ENCODE measurements at regions of chr5 and their contacts with region 1.

Region 1: DNA sequence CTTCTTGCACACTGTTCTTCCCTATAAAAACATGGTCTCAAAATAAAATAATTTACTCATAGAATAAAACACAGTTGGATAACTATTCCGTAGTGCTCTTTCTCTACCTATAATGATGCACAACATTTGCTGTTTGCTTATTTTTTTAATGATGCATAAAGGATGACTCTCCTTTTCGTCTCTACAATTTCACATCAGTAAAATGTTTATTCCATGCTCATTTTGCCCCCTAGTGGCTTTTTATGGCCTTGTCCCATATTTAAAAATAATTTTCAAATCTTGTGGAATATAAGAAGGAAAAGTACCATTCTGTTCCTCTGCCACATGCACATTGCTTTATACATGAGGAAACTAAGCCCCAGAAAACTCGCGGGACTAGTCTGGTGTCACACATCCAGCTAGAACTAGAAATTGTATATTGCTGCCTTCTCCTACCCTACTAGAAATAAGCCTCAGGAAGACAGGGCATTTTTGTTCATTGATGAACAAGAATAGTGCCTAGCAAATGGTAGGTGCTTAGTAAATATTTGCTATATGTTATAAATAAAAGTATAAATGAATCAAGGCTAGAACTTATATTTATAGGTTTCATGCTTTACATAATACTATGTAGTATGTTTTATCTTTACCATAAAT is 12.7 kb downstream of the KCTD16 start:
- DNase-seq: peak in 1 of 3 donors; percentile 23
- ATAC-seq: no peak
- H3K4me3 ChIP-seq: no peak overlapping the region
- H3K4me1 ChIP-seq: peaks cover 11% of the 10 kb centered on the region
- CTCF ChIP-seq: peak; percentile 12

Region 2: GRCh38 chr5:143896966-143897365 is 286.4 kb before region 1 on chr5:
- intact Hi-C with region 1: loop called in 1 of 2 experiments (anchors 5 kb)
- DNase-seq: no peak
- ATAC-seq: no peak
- H3K4me3 ChIP-seq: no peak overlapping the region
- H3K4me1 ChIP-seq: peaks cover 4% of the 10 kb centered on the region
- CTCF ChIP-seq: no peak

Region 3: GRCh38 chr5:143946837-143947236 is 236.5 kb before region 1 on chr5:
- intact Hi-C with region 1: no loop called
- DNase-seq: no peak
- ATAC-seq: no peak
- H3K4me3 ChIP-seq: no peak overlapping the region
- H3K4me1 ChIP-seq: no peaks in the 10 kb centered on the region
- CTCF ChIP-seq: no peak

Measured in mucosa of descending colon (tissue), 3 donors.